ENCODE measurements at regions of chr11 and their contacts with region 1.

Region 1: GRCh38 chr11:69888483-69889076 is 69.4 kb upstream of the FGF3 start:
- DNase-seq: peak; percentile 75
- H3K4me3 Mint-ChIP-seq: no peak overlapping the region
- H3K27ac Mint-ChIP-seq: no peak overlapping the region
- H3K4me1 Mint-ChIP-seq: no peaks in the 10 kb centered on the region
- H3K27me3 Mint-ChIP-seq: peaks cover 25% of the 10 kb centered on the region

Region 2: DNA sequence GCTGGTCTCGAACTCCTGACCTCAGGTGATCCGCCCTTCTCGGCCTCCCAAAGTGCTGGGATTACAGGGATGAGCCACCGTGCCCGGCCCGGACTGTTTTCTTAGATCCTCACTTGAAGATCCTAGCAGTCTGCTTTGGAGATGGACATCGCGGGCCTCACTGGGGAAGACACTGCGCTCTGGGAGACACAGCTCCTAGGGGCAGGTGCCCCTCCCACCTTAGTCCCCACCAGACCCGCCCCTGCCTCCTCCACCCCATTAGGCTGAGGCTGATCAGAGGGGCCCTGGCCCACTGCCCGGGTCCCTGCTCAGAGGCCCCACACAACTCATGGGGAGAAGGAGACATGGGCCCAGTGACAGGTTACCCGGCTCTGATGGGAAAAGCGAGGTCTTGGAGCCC is 202.1 kb before region 1 on chr11:
- CTCF ChIA-PET with region 1: interaction called, 3 read pairs
- POLR2A ChIA-PET with region 1: no interaction called
- intact Hi-C with region 1: loop called (anchors 1 kb)
- DNase-seq: no peak
- H3K4me3 Mint-ChIP-seq: no peak overlapping the region
- H3K27ac Mint-ChIP-seq: no peak overlapping the region
- H3K4me1 Mint-ChIP-seq: peaks cover 10% of the 10 kb centered on the region
- H3K27me3 Mint-ChIP-seq: peaks cover 20% of the 10 kb centered on the region

Region 3: DNA sequence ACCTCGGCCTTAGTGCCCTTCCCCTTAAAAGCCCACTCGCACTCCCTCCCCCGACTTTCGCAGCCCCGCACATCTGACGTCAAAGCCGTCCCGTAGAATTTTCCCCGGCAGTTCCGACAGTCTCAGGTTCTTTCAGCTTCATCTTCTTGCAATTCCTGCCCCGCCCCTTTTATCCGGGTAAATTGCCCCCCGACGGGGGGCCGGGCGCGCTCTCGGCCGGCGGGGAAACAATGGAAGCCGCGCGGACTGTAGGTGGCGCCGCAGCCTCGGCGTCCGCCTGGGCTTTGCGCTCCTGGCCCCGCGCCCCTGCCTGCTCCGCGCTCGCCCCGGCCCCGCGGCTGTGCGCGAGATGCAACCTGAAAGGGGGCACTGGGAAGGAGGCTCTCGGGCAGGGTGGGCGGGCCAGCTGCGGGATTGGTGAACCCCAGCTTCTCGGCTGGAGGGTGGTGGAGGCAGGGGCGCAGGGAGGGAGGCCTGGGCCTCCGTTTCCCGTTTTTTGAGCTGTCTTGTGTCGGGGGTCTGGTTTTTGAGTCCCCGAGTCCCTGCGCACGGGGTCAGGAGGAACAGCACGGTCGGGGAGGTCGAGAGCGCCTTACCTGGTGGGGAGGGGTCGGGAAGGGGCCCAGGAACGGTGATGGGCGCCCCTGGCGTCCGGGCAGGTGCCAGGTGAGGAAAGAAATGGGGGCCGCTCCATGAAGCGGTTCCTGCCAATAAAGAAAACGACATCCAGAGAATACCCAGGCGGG is 183.9 kb before region 1 on chr11:
- CTCF ChIA-PET with region 1: interaction called, 5 read pairs
- POLR2A ChIA-PET with region 1: no interaction called
- intact Hi-C with region 1: loop called (anchors 5 kb)
- DNase-seq: no peak
- H3K4me3 Mint-ChIP-seq: no peak overlapping the region
- H3K27ac Mint-ChIP-seq: no peak overlapping the region
- H3K4me1 Mint-ChIP-seq: peaks cover 9% of the 10 kb centered on the region
- H3K27me3 Mint-ChIP-seq: peaks cover 37% of the 10 kb centered on the region

Region 4: DNA sequence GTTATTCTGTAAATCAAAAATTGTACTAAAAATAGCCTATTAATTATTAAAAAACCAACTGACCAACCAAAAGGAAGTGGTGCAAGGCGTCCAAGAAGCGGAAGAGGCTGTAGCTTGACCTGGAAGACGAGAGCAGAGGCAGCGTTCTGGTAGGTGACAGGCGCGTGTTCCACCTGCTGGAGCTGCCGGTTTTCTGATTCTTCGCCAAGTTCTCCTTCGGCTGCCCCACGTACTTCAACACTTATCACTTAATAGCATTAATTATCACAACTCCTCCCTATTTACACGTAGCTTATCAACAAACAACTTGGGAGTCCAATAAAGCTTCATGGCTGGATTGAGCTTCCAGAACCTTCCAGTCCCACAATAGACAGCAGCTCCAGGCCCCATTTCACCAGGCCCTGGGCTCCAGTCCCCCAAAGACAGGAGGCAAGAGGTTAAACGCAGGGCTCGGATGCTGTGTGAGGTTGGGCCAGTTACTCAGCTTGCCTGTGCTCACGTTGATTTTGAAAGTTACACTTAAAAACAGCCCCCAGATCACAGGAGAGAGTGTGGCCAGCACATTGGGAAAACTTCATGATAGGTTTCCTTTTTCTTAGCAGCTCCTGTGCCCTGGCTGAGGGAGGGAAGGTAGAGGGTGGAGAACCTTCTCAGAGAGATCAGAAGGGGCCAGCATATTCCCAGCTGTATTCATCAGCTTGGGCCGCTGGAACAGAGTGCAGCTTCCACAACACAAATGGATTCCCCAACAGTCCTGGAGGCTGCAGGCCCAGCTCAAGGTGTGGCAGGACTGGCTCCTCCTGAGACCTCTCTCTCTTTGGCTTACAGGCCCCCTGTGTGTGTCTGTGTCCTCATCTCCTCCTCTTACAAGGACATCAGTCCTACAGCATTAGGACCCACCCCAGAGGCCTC is 15.2 kb before region 1 on chr11:
- CTCF ChIA-PET with region 1: no interaction called
- POLR2A ChIA-PET with region 1: no interaction called
- intact Hi-C with region 1: no loop called
- DNase-seq: no peak
- H3K4me3 Mint-ChIP-seq: no peak overlapping the region
- H3K27ac Mint-ChIP-seq: no peak overlapping the region
- H3K4me1 Mint-ChIP-seq: no peaks in the 10 kb centered on the region
- H3K27me3 Mint-ChIP-seq: peaks cover 10% of the 10 kb centered on the region

Region 5: GRCh38 chr11:70005107-70005818 is 116.7 kb after region 1 on chr11:
- CTCF ChIA-PET with region 1: no interaction called
- POLR2A ChIA-PET with region 1: no interaction called
- intact Hi-C with region 1: no loop called
- DNase-seq: no peak
- H3K4me3 Mint-ChIP-seq: no peak overlapping the region
- H3K27ac Mint-ChIP-seq: no peak overlapping the region
- H3K4me1 Mint-ChIP-seq: peaks cover 1% of the 10 kb centered on the region
- H3K27me3 Mint-ChIP-seq: peaks cover 3% of the 10 kb centered on the region

Region 6: GRCh38 chr11:70333261-70333660 is 444.7 kb after region 1 on chr11:
- CTCF ChIA-PET with region 1: no interaction called
- POLR2A ChIA-PET with region 1: no interaction called
- intact Hi-C with region 1: no loop called
- DNase-seq: no peak
- H3K4me3 Mint-ChIP-seq: no peak overlapping the region
- H3K27ac Mint-ChIP-seq: no peak overlapping the region
- H3K4me1 Mint-ChIP-seq: no peaks in the 10 kb centered on the region
- H3K27me3 Mint-ChIP-seq: no peaks in the 10 kb centered on the region

Measured in activated CD4-positive, alpha-beta memory T cell treated with anti-CD3 and anti-CD28 coated beads for 36 hours (primary cell).